Activated naive CD8-positive, alpha-beta T cell treated with anti-CD3 and anti-CD28 coated beads, Interleukin-2, amount 10 ng/mL, durations not matched to agents 7 days and 5 days (primary cell): ENCODE measurements at regions of chr22 and their contacts with region 1.

Region 1: GRCh38 chr22:36423461-36424404 is 36.0 kb upstream of the MYH9 start:
- DNase-seq: no peak
- ATAC-seq: no peak
- H3K4me3 Mint-ChIP-seq: no peak overlapping the region
- H3K27ac Mint-ChIP-seq: no peak overlapping the region
- H3K4me1 Mint-ChIP-seq: peaks cover 30% of the 10 kb centered on the region
- H3K27me3 Mint-ChIP-seq: no peaks in the 10 kb centered on the region

Region 2: GRCh38 chr22:36277482-36278291 is 146.0 kb before region 1 on chr22:
- POLR2A ChIA-PET with region 1: no interaction called
- DNase-seq: peak; percentile 65
- ATAC-seq: peak; percentile 78
- H3K4me3 Mint-ChIP-seq: no peak overlapping the region
- H3K27ac Mint-ChIP-seq: peak overlapping the region; percentile 34
- H3K4me1 Mint-ChIP-seq: peaks cover 22% of the 10 kb centered on the region
- H3K27me3 Mint-ChIP-seq: no peaks in the 10 kb centered on the region

Region 3: DNA sequence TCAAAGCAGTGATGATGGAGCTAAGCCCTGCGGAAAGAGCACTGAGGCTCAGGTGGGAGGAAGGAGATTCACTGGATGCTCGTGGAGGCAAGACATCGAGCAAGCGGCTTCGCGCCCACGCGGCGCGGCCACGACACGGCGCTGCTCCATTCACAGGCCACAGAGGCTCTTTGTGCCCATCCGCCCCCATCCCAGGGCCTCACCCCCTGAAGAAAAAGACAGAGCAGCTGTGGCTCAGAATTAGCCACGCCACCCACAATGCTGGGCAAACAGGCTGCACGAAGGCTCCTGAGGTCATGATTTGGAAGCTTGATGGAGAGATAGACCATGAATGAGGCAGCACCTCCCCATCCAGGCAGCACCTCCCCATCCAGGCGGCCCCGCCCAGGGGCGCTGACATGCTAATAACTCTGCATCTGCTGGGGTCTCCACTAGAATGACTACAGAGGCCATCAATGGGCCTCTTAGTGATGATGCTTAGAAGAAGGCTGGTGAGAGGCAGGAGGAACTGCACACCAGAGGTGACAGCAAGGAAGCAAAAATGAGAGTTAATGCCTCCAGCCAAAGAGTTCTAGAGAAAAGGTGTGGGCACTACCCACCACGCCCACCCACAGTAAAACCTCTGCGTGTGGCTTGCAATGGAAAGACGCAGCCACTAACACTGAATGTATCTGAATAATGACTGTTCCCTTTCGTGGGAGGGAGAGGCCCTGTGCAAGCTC is 79.5 kb before region 1 on chr22:
- POLR2A ChIA-PET with region 1: no interaction called
- DNase-seq: no peak
- ATAC-seq: peak; percentile 27
- H3K4me3 Mint-ChIP-seq: peak overlapping the region; percentile 63
- H3K27ac Mint-ChIP-seq: peak overlapping the region; percentile 89
- H3K4me1 Mint-ChIP-seq: peaks cover 59% of the 10 kb centered on the region
- H3K27me3 Mint-ChIP-seq: no peaks in the 10 kb centered on the region

Region 4: GRCh38 chr22:36397131-36398093 is 26.3 kb before region 1 on chr22:
- POLR2A ChIA-PET with region 1: no interaction called
- DNase-seq: no peak
- ATAC-seq: no peak
- H3K4me3 Mint-ChIP-seq: no peak overlapping the region
- H3K27ac Mint-ChIP-seq: peak overlapping the region; percentile 40
- H3K4me1 Mint-ChIP-seq: peaks cover 21% of the 10 kb centered on the region
- H3K27me3 Mint-ChIP-seq: peaks cover 2% of the 10 kb centered on the region

Region 5: DNA sequence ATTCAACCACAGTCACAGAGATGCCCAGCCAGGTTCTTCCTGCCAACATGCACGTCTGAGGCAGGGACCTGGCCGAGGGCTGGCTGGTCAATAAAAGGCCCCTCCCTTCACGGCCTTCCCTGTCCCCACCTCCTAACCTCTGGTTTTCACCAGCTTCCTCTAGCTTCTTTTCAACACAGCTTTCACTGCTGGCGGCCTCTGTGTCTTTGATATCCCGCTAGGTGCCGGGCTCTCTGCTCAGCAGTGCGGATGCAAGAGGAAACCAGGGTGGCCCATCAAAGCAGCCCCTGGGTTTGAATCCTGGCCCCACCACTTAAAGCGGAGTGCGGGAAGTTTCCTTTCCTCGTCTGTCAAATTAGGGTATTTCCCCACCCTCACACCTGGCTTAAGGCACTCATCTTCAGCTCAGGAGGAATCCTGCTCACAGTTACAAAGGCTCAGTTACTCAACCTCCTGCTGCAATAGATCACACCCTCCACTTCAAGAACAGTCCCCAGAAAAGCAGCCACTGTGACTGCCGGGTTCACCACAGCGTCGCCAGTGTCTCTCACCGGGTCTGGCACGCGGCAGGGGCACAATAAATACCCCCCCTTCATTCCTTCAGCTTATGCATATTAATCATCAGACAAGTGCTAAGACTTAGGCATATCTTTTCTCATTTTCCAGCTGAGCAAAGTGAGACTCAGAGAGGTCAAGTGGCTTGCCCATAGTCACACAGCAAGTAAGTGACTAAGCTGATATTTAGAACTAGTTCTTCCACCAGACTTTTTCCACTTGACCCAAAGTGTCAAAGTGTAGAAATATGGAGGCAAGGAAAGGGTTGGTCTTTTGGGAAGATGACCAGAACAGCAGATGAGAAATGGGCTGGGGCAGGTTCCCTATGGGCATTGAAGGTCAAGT is 12.0 kb after region 1 on chr22:
- POLR2A ChIA-PET with region 1: interaction called, 11 read pairs
- DNase-seq: peak; percentile 62
- ATAC-seq: peak; percentile 84
- H3K4me3 Mint-ChIP-seq: peak overlapping the region; percentile 62
- H3K27ac Mint-ChIP-seq: peak overlapping the region; percentile 90
- H3K4me1 Mint-ChIP-seq: peaks cover 29% of the 10 kb centered on the region
- H3K27me3 Mint-ChIP-seq: no peaks in the 10 kb centered on the region